ENCODE measurements at regions of chr5 and their contacts with region 1.

Region 1: DNA sequence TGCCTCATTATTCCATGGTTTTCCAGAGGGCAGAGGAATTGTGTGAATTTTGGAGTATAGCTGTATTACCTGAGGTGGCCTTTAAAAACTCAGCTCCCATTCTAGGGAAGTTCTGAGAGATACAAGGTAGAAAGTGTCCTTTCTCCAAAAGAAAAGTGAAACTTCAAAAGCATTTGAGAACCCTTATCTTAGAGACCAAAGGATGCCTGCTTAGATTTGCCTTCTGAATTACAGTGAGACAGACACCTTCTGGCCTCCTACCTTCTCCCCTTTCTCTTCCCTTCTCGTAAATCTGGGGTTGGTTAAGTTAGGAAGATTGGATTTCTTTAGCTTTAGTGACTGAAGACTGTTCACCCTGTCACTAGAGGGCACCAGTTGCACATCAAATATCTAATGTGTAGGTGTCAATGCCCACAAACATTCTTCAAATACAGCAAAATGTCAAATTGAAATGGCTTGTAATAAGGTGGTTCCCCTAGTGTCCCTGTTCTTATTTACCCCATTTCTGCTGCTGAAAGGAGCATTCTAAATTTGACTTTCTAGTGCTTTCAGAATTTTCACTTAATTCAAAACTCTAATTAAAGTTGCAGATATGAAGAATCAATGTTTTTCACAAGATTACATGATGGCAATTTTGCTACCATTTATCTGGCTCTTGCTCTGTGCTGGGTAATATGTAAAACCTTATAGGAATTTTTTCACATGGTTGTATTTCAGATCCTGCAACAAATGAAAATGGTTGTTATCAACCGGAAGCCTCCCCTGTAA is 46.7 kb downstream of the PRRC1 start:
- DNase-seq: peak; percentile 42
- CTCF ChIP-seq: peak; percentile 78

Region 2: DNA sequence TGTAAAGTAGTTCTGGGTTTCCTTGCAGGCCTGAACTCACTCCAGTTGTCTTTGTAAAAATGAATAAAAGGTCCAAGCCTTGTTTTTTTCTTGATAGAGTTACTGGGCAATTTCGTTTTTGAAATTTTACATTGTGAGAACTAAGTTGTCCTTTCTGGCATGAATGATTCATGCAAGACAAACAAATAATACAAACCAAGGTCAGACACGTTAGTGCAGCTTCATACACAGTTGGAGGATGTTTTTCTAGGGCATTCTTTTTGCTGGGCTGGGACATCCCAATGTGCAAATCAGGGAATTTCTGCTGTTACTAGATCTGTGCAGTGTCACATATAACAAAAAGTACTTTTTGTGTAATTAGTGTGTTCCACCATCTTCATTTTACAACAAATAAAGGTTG is 177.6 kb before region 1 on chr5:
- CTCF ChIA-PET with region 1: no interaction called
- POLR2A ChIA-PET with region 1: no interaction called
- DNase-seq: no peak
- CTCF ChIP-seq: no peak

Region 3: GRCh38 chr5:127549518-127549917 is 14.7 kb before region 1 on chr5:
- CTCF ChIA-PET with region 1: interaction called, 46 read pairs
- POLR2A ChIA-PET with region 1: no interaction called
- DNase-seq: no peak
- CTCF ChIP-seq: no peak

Region 4: GRCh38 chr5:127580731-127581130 is 16.5 kb after region 1 on chr5:
- CTCF ChIA-PET with region 1: interaction called, 47 read pairs
- POLR2A ChIA-PET with region 1: no interaction called
- DNase-seq: no peak
- CTCF ChIP-seq: no peak

Region 5: DNA sequence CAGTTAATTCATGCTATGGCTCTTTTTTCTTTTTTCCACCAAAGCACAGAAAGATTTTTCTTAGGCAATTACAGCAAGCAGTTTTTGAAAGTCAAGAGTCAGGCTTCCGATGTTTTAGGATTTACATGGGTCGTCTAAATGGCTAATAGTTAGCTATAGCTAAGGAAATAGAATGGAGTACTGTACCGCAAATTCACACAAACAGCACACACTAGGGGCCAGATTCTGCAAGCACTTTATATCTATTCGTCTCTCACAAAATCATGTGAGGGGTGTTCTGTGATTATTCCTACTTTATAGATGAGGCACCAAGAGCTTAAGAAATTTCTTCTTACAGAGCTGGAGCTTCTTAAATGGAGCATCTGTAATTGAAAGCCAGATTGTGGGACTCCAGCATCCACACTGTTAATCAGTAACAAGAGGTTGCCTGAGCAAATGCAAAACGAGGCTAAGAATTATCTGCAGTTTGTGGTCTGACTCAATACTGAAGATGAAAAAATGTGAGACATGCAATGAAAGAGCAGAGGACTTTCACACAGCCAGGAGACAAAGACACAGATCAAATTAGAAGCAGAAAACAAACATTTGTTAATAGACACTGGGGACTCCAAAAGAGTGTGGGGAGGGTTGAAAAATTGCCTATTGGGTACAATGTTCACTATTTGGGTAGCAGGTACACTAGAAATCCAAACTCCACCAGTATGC is 22.0 kb after region 1 on chr5:
- CTCF ChIA-PET with region 1: interaction called, 47 read pairs
- POLR2A ChIA-PET with region 1: no interaction called
- DNase-seq: peak; percentile 50
- CTCF ChIP-seq: no peak

Region 6: DNA sequence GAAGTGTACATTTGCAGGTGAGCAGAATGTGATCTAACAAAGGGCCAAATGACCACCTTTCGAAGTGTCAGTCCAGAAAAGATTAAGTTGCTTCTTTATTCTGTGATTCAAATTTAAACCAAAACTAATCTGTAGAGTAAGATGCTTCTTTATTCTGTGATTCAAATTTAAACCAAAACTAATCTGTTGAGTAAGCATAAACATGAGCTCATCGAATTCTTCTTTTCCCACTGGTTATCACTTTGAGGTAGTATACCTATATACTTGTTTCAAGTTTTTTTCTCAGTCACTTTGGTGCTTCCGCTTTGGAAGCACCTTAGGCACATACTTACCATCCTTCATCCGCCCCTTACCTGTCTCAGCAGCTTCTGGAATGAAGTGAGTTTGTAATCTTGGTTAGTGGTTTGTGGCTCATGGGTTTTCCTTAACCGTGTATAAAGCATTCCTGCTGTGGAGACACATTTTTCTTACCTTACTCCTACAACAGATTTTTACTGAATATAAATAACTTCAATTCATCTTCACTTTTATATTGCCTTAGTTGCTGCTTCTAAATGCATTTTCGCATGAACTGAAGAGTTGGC is 44.0 kb after region 1 on chr5:
- CTCF ChIA-PET with region 1: interaction called, 14 read pairs
- POLR2A ChIA-PET with region 1: no interaction called
- DNase-seq: no peak
- CTCF ChIP-seq: no peak

Region 7: DNA sequence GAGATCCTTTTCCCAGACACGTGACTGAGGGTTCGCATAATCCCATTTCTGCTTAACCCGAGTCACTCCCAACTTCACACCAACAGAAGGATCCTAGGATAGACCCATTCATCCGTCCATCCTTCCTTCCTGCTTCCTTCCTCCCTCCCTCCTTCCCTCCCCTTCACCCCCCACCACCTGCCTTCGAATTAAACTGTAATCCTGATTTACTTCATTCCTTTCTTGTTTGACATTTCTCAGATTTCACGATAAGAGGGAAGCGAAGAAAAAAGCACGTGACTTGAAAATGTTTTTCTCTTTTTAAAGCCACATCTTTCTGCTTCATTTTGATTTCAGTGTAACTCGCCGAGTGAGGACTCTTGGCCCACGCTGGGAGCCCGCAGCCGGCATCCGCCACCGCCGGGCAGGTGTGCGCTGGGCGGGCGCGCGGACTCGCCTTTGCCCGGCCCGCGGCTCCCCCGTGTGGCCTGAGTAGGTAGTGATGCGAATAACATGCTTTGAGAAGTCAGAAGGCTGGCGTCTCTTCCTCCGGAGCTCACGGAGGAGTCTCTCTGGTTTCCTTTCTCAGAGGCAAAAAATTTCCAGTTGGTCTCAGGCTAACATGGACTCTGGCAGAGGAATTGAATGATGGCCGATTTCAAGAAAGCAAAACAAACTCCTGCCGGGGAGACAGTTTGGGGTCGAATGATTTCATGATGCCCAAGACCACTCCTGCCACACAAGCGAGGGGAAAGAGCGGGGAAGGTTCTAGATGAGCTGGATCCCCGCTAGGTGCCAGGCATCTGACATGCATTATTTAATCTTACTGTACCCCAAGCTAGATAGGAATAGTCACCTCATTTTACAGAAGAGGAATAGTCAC is 637.1 kb after region 1 on chr5:
- CTCF ChIA-PET with region 1: interaction called, 30 read pairs
- POLR2A ChIA-PET with region 1: no interaction called
- DNase-seq: peak; percentile 87
- CTCF ChIP-seq: peak; percentile 86

Measured in GM10248 (cell line).